Endothelial cell of umbilical vein (primary cell): ENCODE measurements at regions of chr5 and their contacts with region 1.

Region 1: GRCh38 chr5:76867827-76868693 is 18.2 kb downstream of the S100Z start:
- DNase-seq: peak; percentile 86
- H3K4me3 ChIP-seq: no peak overlapping the region
- H3K27ac ChIP-seq: no peak overlapping the region
- H3K4me1 ChIP-seq: no peaks in the 10 kb centered on the region
- H3K27me3 ChIP-seq: no peaks in the 10 kb centered on the region
- CTCF ChIP-seq: peak; percentile 71 to 79
- POLR2A ChIP-seq: no peak

Region 2: GRCh38 chr5:77015938-77016569 is 148.0 kb after region 1 on chr5:
- CTCF ChIA-PET with region 1: interaction called, 63 read pairs
- POLR2A ChIA-PET with region 1: no interaction called
- dilution Hi-C with region 1: no loop called
- intact Hi-C with region 1: loop called (anchors 1 kb)
- DNase-seq: peak; percentile 66
- H3K4me3 ChIP-seq: no peak overlapping the region
- H3K27ac ChIP-seq: no peak overlapping the region
- H3K4me1 ChIP-seq: no peaks in the 10 kb centered on the region
- H3K27me3 ChIP-seq: peaks cover 13 to 14% of the 10 kb centered on the region in 2 experiments
- CTCF ChIP-seq: peak; percentile 9 to 18
- POLR2A ChIP-seq: no peak

Region 3: GRCh38 chr5:77086689-77087483 is 218.8 kb after region 1 on chr5 and contains the start of gene ZBED3:
- CTCF ChIA-PET with region 1: no interaction called
- POLR2A ChIA-PET with region 1: no interaction called
- dilution Hi-C with region 1: no loop called
- intact Hi-C with region 1: no loop called
- DNase-seq: peak; percentile 83
- H3K4me3 ChIP-seq: peak within 1 kb of the TSS; percentile 58 to 86 (median 76)
- H3K27ac ChIP-seq: peak within 1 kb of the TSS; percentile 82
- H3K4me1 ChIP-seq: peaks cover 16% of the 10 kb centered on the region
- H3K27me3 ChIP-seq: no peaks in the 10 kb centered on the region
- CTCF ChIP-seq: peak in 1 of 2 donors; percentile 16
- POLR2A ChIP-seq: peak; percentile 43
- total RNA-seq, gene ZBED3: 11.8 and 16.0 TPM in 2 replicates

Region 4: GRCh38 chr5:77143998-77144836 is 276.2 kb after region 1 on chr5:
- CTCF ChIA-PET with region 1: interaction called, 3 read pairs
- POLR2A ChIA-PET with region 1: no interaction called
- dilution Hi-C with region 1: no loop called
- intact Hi-C with region 1: loop called (anchors 1 kb)
- DNase-seq: peak; percentile 66
- H3K4me3 ChIP-seq: no peak overlapping the region
- H3K27ac ChIP-seq: no peak overlapping the region
- H3K4me1 ChIP-seq: peaks cover 10% of the 10 kb centered on the region
- H3K27me3 ChIP-seq: no peaks in the 10 kb centered on the region
- CTCF ChIP-seq: peak; percentile 83 to 90
- POLR2A ChIP-seq: no peak

Region 5: DNA sequence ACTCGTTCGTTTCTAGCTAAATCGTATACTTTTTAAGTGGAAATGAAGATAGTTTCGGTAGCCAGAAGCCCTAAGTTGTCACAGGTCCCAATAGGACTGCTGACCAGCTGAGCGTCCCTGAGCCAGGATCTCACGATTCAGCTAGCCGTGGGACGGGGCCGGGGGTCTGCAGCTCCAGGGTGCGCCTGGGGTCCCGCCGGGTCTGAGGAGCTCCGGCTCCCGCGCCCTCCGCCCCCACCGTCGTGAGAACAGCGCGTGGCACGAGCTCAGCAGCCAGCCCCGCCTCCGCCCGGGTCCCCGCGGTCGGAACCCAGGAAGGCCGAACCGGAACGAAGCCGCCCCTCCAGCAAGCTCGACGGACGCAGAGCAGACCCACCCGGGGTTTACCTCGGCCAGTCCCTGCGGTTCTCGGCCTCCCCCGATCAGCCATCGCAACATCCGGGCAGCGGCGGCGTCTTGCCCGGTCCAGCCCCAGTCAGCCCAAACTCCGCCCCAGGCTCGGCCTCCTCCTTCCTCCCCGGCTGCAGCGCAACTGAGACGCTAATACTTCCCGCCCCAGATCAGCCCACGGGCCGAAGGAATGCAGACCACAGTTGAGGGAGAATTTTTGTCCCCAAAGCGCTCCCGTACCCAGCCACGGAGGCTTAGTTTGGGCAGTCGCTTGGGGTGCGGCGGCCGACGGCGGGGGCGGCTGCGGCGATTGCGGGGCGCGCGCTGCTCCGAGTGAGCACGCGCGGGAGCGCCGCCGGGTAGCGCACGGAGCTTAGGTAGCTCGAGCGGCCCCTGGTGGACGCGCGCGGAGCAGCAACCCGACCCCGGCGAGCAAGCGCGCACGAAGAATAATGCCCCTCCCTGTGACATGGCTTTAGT is 624.0 kb after region 1 on chr5 and contains the start of gene WDR41:
- CTCF ChIA-PET with region 1: interaction called, 16 read pairs
- POLR2A ChIA-PET with region 1: no interaction called
- dilution Hi-C with region 1: no loop called
- intact Hi-C with region 1: loop called (anchors 1 kb)
- DNase-seq: peak; percentile 96
- H3K4me3 ChIP-seq: peak within 1 kb of the TSS; percentile 89 to 94 (median 90)
- H3K27ac ChIP-seq: peak within 1 kb of the TSS; percentile 79
- H3K4me1 ChIP-seq: peaks cover 9% of the 10 kb centered on the region
- H3K27me3 ChIP-seq: peaks cover 12 to 25% of the 10 kb centered on the region in 2 experiments
- CTCF ChIP-seq: peak; percentile 93 to 94
- POLR2A ChIP-seq: peak; percentile 54
- total RNA-seq, gene WDR41: 23.9 and 33.6 TPM in 2 replicates

Region 6: DNA sequence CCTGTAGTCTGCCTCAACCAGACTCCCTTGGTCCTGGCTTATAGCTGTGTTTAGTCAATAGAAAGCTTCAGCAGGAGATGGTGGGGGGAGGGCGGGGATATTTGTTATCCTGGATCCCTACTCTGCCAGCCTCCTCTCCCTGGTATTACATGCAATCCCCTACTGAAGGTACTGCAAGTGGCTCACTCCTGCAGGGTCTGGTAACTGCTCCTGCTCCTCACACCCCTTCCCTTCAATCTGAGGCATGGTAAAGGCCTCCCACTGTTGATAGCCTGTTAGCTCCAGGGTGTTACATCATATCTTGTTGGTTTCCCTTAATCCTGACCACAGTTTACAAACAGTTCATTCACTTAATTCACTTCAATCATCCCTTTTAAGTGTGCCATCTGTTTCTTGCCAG is 1288.9 kb after region 1 on chr5:
- CTCF ChIA-PET with region 1: no interaction called
- POLR2A ChIA-PET with region 1: no interaction called
- dilution Hi-C with region 1: no loop called
- intact Hi-C with region 1: loop called (anchors 10 kb)
- DNase-seq: no peak
- H3K4me3 ChIP-seq: no peak overlapping the region
- H3K27ac ChIP-seq: no peak overlapping the region
- H3K4me1 ChIP-seq: no peaks in the 10 kb centered on the region
- H3K27me3 ChIP-seq: no peaks in the 10 kb centered on the region
- CTCF ChIP-seq: no peak
- POLR2A ChIP-seq: no peak